Common myeloid progenitor, CD34-positive (primary cell): ENCODE measurements at regions of chr6 and their contacts with region 1.

Region 1: DNA sequence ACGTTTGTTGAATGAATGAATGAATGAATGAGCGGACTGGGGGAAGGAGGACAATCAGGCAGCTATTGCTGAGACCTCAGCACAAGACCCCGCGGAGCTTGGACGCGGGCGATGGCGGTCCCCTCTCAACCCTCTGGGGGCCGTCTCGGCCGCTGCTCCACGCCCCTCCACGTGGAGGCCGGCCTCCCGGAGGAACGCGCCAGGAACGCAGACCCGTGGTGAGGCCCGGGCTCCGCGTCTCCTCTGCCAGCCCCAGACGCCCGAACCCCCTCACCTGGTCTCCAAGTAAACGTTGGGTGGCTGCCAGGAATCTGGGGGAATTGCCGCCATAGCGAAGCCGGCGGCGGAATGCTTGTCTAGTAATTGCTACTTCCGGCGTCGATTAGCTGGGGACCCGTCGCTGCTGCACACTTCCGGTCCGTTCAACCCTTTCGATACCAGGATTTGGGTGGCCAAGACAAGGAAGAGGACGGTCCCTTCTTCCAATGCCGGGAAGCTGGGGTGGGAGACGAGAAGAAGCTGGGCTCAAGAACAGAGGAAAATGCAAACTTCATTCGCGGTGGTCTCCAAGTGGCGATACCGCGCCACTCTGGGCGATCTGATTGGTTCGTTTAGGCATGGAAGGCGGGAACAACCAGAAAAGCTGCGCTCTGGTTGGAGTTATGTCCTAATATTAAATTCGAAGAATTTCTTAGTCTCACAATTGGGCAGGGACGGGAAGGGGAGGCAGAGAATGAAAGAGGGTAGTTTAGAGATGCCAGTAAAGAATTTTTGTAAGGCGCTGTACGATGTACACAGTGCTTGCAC is at the start of gene PPIL1:
- DNase-seq: peak; percentile 92 to 96 (median 94)
- H3K4me3 ChIP-seq: peak within 1 kb of the TSS; percentile 84 to 99 (median 95)
- H3K27ac ChIP-seq: peak within 1 kb of the TSS; percentile 97 to 99
- H3K4me1 ChIP-seq: peaks cover 10 to 26% (median 14%) of the 10 kb centered on the region in 4 experiments
- H3K27me3 ChIP-seq: no peaks in the 10 kb centered on the region

Region 2: GRCh38 chr6:36885461-36886401 is 11.1 kb after region 1 on chr6 and contains the start of gene C6orf89:
- CTCF ChIA-PET with region 1: interaction called, 49 read pairs
- POLR2A ChIA-PET with region 1: interaction called, 7 read pairs
- DNase-seq: peak; percentile 97 to 98 (median 98)
- H3K4me3 ChIP-seq: peak within 1 kb of the TSS; percentile 76 to 95 (median 87)
- H3K27ac ChIP-seq: peak within 1 kb of the TSS; percentile 46 to 82
- H3K4me1 ChIP-seq: peaks cover 4 to 15% (median 11%) of the 10 kb centered on the region in 4 experiments
- H3K27me3 ChIP-seq: no peaks in the 10 kb centered on the region

Region 3: DNA sequence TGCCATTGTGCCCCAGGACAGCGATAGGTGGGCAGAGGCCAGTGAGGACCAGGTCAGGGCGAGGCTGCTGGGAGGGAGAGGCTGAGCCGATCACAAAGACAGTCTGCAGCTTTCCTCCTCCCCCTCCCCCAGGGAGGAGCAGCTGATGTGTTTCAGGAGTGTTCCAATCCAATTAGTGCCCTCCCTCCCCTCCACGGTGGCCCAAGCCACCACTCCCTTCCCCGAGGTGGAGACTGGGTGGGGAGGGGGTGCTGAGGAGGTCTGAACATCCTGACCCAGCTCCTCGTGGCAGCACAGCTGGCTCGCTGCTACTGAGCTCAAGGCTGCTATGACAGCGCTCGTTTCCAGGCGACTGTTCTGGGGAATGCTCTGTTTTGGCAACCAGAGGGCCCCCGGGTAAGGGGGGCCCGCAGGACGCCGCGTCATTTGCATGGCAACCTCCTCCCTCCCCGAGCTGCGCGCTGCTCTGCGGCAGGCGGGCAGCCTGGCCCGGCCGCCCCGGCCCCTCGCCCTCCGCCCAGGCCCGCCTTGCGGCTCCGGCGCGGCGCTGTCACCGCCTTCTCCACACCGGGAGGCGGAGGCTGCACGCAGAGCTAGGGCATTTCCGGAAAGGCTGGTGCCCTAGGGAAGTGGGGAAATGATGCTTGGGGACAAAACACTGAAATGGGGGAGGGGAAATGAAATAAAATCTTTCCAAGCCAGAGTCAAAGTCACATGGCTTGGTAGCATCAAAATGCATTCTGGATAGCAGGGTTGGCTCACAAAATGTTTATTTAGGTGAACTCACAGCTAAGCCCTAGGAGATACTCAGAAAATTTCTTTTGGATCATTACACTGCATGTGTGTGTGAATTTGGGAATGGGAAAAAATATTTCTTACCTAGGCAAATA is 227.9 kb after region 1 on chr6:
- CTCF ChIA-PET with region 1: no interaction called
- POLR2A ChIA-PET with region 1: no interaction called
- DNase-seq: peak; percentile 92 to 98 (median 97)
- H3K4me3 ChIP-seq: peak overlapping the region in 6 of 7 experiments; percentile 28 to 73 (median 62)
- H3K27ac ChIP-seq: peak overlapping the region; percentile 69 to 91
- H3K4me1 ChIP-seq: peaks cover 4 to 44% (median 24%) of the 10 kb centered on the region in 4 experiments
- H3K27me3 ChIP-seq: no peaks in the 10 kb centered on the region